Heart right ventricle (tissue), 16 donors: ENCODE measurements at regions of chr21 and their contacts with region 1.

Region 1: GRCh38 chr21:29372063-29372802 is 73.5 kb downstream of the BACH1 start:
- DNase-seq: peak in 1 of 2 donors; percentile 80
- ATAC-seq: peak; percentile 86 to 94 (median 92)
- H3K4me3 ChIP-seq: no peak overlapping the region
- H3K27ac ChIP-seq: no peak overlapping the region
- H3K4me1 ChIP-seq: peaks cover 0 to 5% (median 0%) of the 10 kb centered on the region in 9 donors
- H3K27me3 ChIP-seq: no peaks in the 10 kb centered on the region
- CTCF ChIP-seq: peak; percentile 67 to 83 (median 74)

Region 2: DNA sequence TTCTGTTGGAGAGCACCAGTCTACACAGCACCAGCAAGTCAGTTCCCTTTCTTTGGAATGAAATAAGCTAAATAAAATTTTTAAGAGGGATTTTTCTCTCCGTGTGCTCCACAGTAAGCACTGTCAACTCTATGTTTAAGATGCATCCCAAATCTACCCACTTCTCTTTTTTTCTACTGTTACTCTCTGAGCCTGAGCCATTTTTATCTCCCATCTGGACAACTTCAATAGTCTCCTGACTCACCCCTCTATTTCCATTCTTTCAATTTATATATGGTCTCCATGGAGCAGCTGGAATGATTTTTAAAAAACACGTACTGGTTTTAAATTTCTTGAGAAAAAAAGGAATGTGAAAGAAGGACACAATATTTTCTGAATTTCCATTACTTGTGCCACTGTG is 274.1 kb before region 1 on chr21:
- intact Hi-C with region 1: loop called in 4 of 10 experiments (anchors 5 kb)
- DNase-seq: no peak
- ATAC-seq: no peak
- H3K4me3 ChIP-seq: no peak overlapping the region
- H3K27ac ChIP-seq: peak overlapping the region in 1 of 10 donors; percentile 41
- H3K4me1 ChIP-seq: peaks cover 0 to 34% (median 0%) of the 10 kb centered on the region in 9 donors
- H3K27me3 ChIP-seq: no peaks in the 10 kb centered on the region
- CTCF ChIP-seq: no peak

Region 3: GRCh38 chr21:29164325-29164942 is 207.8 kb before region 1 on chr21:
- intact Hi-C with region 1: loop called (anchors 1 to 5 kb)
- DNase-seq: no peak
- ATAC-seq: peak in 7 of 8 donors; percentile 73 to 86 (median 82)
- H3K4me3 ChIP-seq: no peak overlapping the region
- H3K27ac ChIP-seq: peak overlapping the region in 7 of 10 donors; percentile 2 to 84 (median 46)
- H3K4me1 ChIP-seq: peaks cover 0 to 58% (median 17%) of the 10 kb centered on the region in 9 donors
- H3K27me3 ChIP-seq: no peaks in the 10 kb centered on the region
- CTCF ChIP-seq: peak; percentile 29 to 85 (median 69)

Region 4: DNA sequence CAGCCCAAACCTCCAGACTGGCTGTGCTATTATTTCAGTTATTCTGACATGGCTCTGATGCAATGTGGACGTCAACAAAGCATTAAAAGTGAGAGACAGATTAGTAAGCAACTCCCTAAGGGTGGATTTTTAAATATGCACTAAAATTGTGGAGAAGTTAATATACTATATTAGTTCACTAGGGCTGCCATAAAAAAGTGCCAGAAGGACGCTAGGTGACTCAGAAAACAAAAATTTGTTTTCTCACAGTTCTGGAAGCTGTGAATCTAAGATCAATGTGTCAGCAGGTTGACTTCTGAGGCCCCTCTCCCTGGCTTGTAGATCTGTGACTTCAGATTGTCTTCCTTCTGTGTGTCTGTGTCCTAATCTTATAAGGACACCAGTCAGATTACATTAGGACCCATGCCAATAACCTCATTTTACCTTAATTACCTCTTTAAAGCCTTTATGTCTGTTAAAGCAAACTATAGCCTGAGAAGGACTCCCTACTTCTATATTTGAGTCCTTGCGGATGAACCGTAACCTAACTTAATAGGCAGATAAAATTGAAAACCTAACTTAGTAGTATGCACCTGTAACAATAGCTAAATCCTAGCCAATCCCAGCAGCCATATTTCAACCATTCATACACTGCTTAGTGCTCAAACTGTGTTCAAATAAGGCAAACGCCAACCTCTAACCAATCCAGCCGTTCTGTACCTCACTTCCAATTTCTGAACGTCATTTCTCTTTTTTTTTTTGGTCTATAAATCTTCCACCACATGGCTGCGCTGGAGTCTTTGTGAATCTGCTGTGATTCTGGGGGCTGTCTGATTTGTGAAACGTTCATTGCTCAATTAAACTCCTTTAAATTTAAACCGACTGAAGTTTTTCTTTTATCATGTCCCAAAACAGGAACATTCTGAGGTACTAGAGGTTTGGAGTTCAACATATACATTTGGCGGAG is 139.4 kb before region 1 on chr21:
- intact Hi-C with region 1: loop called in 3 of 10 experiments (anchors 10 kb)
- DNase-seq: no peak
- ATAC-seq: no peak
- H3K4me3 ChIP-seq: no peak overlapping the region
- H3K27ac ChIP-seq: peak overlapping the region in 1 of 10 donors; percentile 22
- H3K4me1 ChIP-seq: peaks cover 0 to 70% (median 4%) of the 10 kb centered on the region in 9 donors
- H3K27me3 ChIP-seq: no peaks in the 10 kb centered on the region
- CTCF ChIP-seq: peak in 3 of 9 donors; percentile 16 to 34 (median 17)

Region 5: DNA sequence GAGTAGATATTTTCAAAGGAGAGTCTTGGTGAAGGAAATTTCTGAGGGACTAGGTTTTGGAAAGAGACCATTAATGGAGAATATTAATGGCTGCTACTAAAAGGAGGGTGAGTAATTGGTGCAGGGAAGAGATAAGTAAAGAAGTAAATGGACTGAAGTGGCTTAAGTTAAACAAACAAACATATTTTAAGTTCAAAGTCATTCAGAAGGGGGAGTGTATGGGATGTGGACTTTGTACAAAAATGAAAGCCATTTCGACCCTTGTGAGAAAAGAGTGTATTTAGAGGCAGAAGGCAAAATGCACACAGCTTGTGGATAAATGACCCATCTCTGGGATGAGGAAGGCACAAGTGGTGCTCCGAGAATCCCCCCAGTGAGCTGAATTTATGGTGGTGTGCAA is 98.2 kb after region 1 on chr21:
- intact Hi-C with region 1: no loop called
- DNase-seq: no peak
- ATAC-seq: no peak
- H3K4me3 ChIP-seq: no peak overlapping the region
- H3K27ac ChIP-seq: no peak overlapping the region
- H3K4me1 ChIP-seq: no peaks in the 10 kb centered on the region
- H3K27me3 ChIP-seq: no peaks in the 10 kb centered on the region
- CTCF ChIP-seq: no peak